Transverse colon (tissue), 4 donors: ENCODE measurements at regions of chr7 and their contacts with region 1.

Region 1: GRCh38 chr7:95632609-95633008 is 36.3 kb upstream of the PDK4 start:
- DNase-seq: no peak
- H3K4me3 ChIP-seq: no peak overlapping the region
- H3K27ac ChIP-seq: peak overlapping the region in 1 of 4 donors; percentile 0
- H3K4me1 ChIP-seq: peaks cover 0 to 31% (median 13%) of the 10 kb centered on the region in 4 donors
- H3K27me3 ChIP-seq: no peaks in the 10 kb centered on the region
- CTCF ChIP-seq: no peak
- EP300 ChIP-seq: no peak
- POLR2A ChIP-seq: no peak

Region 2: GRCh38 chr7:95596198-95597063 is 36.2 kb before region 1 on chr7 and contains the start of gene PDK4:
- in situ Hi-C with region 1: no loop called
- intact Hi-C with region 1: no loop called
- DNase-seq: peak; percentile 96
- H3K4me3 ChIP-seq: peak within 1 kb of the TSS; percentile 41 to 83 (median 73)
- H3K27ac ChIP-seq: peak within 1 kb of the TSS; percentile 95 to 96 (median 96)
- H3K4me1 ChIP-seq: peaks cover 0 to 17% (median 8%) of the 10 kb centered on the region in 4 donors
- H3K27me3 ChIP-seq: no peaks in the 10 kb centered on the region
- CTCF ChIP-seq: peak in 1 of 5 experiments; percentile 20
- EP300 ChIP-seq: peak; percentile 89
- POLR2A ChIP-seq: peak; percentile 95
- total RNA-seq, gene PDK4: 134 to 510 (median 273) TPM

Region 3: DNA sequence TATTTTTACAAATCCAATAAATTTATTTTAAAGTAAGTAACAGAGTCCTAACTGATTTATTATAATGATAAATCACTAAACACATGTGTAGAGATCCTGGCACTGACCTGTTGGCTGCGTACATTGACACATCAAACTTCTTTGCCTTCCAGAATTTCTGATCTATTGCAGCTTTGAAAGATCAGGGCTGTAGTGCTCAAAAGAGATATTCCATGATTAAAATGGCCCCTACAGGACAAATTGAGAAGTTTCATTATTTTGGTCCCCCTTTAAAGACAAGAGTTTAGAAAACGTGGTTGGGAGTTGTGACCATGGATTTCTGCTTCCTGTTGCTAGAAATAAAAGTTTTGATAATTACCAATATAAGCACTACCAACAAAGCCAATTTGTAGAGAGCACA is 51.4 kb after region 1 on chr7:
- in situ Hi-C with region 1: loop called in 1 of 4 experiments (anchors 5 kb)
- intact Hi-C with region 1: no loop called
- DNase-seq: no peak
- H3K4me3 ChIP-seq: no peak overlapping the region
- H3K27ac ChIP-seq: peak overlapping the region in 2 of 4 donors; percentile 11 to 42
- H3K4me1 ChIP-seq: peaks cover 0 to 12% (median 5%) of the 10 kb centered on the region in 4 donors
- H3K27me3 ChIP-seq: no peaks in the 10 kb centered on the region
- CTCF ChIP-seq: peak; percentile 49 to 83 (median 63)
- EP300 ChIP-seq: no peak
- POLR2A ChIP-seq: no peak